ENCODE measurements at regions of chr21 and their contacts with region 1.

Region 1: DNA sequence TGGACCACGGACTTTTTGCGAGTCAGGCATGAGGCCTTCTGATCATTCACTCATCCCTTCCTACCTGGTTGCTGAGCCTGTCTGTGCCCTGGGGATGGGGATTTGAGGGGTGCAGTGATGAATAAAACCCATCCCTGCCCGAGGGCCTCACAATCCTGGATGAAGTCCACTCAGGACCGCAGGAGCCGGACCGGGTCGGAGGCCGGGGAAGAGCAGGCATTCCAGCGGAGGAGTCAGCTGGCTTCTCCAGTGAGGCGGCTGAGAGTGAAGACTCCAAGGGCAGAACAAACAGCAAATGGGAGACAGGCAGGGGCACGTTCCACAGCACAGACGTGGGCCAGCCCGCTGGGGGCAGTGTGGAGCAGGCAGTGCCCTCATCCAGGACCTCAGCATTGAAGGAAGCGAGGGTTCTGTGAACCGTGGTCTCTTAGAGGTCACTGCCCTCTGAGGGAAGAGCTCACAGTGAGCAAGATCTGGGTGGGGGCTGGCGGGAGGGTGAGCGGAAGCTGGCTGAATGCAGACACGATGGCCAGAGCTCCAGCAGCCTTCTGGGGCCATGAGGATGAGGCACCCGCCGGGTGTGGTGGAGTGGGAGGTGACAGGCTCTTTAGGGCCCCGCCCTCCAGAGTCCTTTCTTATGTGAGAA is 10.9 kb upstream of the LRRC3 start:
- DNase-seq: peak; percentile 66
- ATAC-seq: peak; percentile 87
- H3K4me3 ChIP-seq: peak overlapping the region in 2 of 3 experiments; percentile 9 to 56; a peak in 1 of 6 replicates
- H3K27ac ChIP-seq: no peak overlapping the region
- H3K4me1 ChIP-seq: peaks cover 53% of the 10 kb centered on the region
- H3K27me3 ChIP-seq: peaks cover 0 to 2% of the 10 kb centered on the region in 2 experiments; a peak in 1 of 5 replicates
- CTCF ChIP-seq: peak; percentile 94
- EP300 ChIP-seq: no peak
- POLR2A ChIP-seq: no peak
- RAD21 ChIP-seq: peak; percentile 70

Region 2: GRCh38 chr21:44454747-44455523 is 10.5 kb after region 1 on chr21 and contains the start of gene LRRC3:
- CTCF ChIA-PET with region 1: no interaction called
- POLR2A ChIA-PET with region 1: interaction called, 10 read pairs
- in situ Hi-C with region 1: no loop called
- intact Hi-C with region 1: no loop called
- DNase-seq: peak; percentile 82
- ATAC-seq: peak; percentile 61
- H3K4me3 ChIP-seq: peak within 1 kb of the TSS; percentile 75 to 87 (median 75)
- H3K27ac ChIP-seq: peak within 1 kb of the TSS; percentile 85
- H3K4me1 ChIP-seq: peaks cover 51% of the 10 kb centered on the region
- H3K27me3 ChIP-seq: no peaks in the 10 kb centered on the region; a peak in 2 of 5 replicates
- CTCF ChIP-seq: no peak
- EP300 ChIP-seq: no peak
- POLR2A ChIP-seq: no peak
- RAD21 ChIP-seq: no peak
- total RNA-seq, gene LRRC3: 3.9 and 4.8 TPM in 2 replicates